Activated naive CD4-positive, alpha-beta T cell treated with anti-CD3 and anti-CD28 coated beads for 36 hours (primary cell): ENCODE measurements at regions of chr19 and their contacts with region 1.

Region 1: DNA sequence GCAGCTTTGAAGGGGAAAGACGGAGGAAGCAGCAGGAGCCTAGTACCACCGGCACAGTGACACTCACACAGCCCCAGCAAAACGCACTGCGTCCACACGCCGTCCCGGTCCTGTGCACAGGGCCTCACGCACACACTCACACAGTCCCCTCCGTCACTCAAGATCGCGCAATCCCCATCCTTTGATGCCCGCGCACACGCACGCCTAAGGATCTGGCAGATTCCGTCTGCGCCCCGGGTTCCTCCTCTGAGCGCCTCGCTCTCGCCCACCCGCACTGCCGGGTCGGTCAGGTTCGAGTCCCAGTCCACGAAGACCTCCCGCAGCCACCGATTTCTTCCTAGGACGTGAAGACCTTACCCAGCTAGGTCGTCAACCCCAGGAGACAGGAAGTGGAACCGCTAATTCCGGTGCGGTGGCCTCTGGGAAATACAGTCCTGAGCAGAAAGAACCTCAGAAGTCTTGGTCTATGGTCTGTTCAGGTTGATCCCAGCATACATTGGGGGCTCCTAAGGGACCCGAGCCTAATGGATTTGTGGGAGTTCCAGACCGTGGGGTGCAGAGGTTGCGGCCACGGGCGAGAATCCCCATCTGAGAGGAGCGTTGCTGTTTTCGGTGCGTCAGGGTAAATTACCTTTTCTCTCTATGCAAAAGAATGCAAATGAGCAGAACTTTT is at the start of gene ZNF780B:
- DNase-seq: peak; percentile 84
- H3K4me3 Mint-ChIP-seq: peak within 1 kb of the TSS; percentile 99
- H3K27ac Mint-ChIP-seq: peak within 1 kb of the TSS; percentile 93
- H3K4me1 Mint-ChIP-seq: peaks cover 36% of the 10 kb centered on the region
- H3K27me3 Mint-ChIP-seq: no peaks in the 10 kb centered on the region
- total RNA-seq, gene ZNF780B: 8.3 to 9.8 TPM

Region 2: GRCh38 chr19:40090241-40091204 is 34.6 kb after region 1 on chr19 and contains the start of gene ZNF780A:
- CTCF ChIA-PET with region 1: no interaction called
- intact Hi-C with region 1: loop called (anchors 2 kb)
- DNase-seq: peak; percentile 84
- H3K4me3 Mint-ChIP-seq: peak within 1 kb of the TSS; percentile 97
- H3K27ac Mint-ChIP-seq: peak within 1 kb of the TSS; percentile 95
- H3K4me1 Mint-ChIP-seq: peaks cover 28% of the 10 kb centered on the region
- H3K27me3 Mint-ChIP-seq: peaks cover under 1% of the 10 kb centered on the region
- total RNA-seq, gene ZNF780A: 8.8 to 10.5 TPM